IMR-90 (cell line): ENCODE measurements at regions of chr3 and their contacts with region 1.

Region 1: GRCh38 chr3:151852074-151852811 is 21.2 kb upstream of the SUCNR1 start:
- DNase-seq: no peak
- ATAC-seq: no peak
- H3K4me3 ChIP-seq: no peak overlapping the region
- H3K27ac ChIP-seq: no peak overlapping the region
- H3K4me1 ChIP-seq: no peaks in the 10 kb centered on the region
- H3K27me3 ChIP-seq: no peaks in the 10 kb centered on the region
- CTCF ChIP-seq: no peak
- POLR2A ChIP-seq: no peak
- RAD21 ChIP-seq: no peak

Region 2: GRCh38 chr3:151268267-151269235 is 583.7 kb before region 1 on chr3:
- CTCF ChIA-PET with region 1: no interaction called
- POLR2A ChIA-PET with region 1: interaction called, 13 read pairs
- dilution Hi-C with region 1: no loop called
- in situ Hi-C with region 1: no loop called
- intact Hi-C with region 1: no loop called
- DNase-seq: peak; percentile 28
- ATAC-seq: no peak
- H3K4me3 ChIP-seq: no peak overlapping the region
- H3K27ac ChIP-seq: no peak overlapping the region
- H3K4me1 ChIP-seq: peaks cover 2% of the 10 kb centered on the region; the same call in 1 of the 2 replicates
- H3K27me3 ChIP-seq: no peaks in the 10 kb centered on the region
- CTCF ChIP-seq: no peak
- POLR2A ChIP-seq: no peak
- RAD21 ChIP-seq: no peak

Region 3: DNA sequence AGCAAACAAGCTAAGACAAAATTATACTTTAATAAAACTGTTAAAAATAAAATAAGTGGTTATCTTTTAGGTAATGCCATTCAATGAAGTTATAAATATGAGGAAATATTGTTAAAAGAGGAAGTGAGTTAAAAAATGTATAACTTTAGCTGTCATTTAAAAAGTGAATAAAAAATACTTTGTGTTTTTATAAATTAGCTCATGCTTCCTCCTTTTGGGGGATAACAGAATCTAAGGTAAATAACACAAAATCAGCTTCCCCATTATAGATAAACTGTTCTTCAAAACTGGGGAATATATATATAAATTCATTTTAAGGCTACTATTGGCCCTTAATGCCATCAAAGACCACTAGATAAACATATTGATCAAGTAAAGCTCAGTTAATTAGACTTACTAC is 232.2 kb before region 1 on chr3:
- CTCF ChIA-PET with region 1: no interaction called
- POLR2A ChIA-PET with region 1: no interaction called
- dilution Hi-C with region 1: no loop called
- in situ Hi-C with region 1: no loop called
- intact Hi-C with region 1: no loop called
- DNase-seq: no peak
- ATAC-seq: no peak
- H3K4me3 ChIP-seq: no peak overlapping the region
- H3K27ac ChIP-seq: no peak overlapping the region
- H3K4me1 ChIP-seq: no peaks in the 10 kb centered on the region
- H3K27me3 ChIP-seq: no peaks in the 10 kb centered on the region
- CTCF ChIP-seq: no peak
- POLR2A ChIP-seq: no peak
- RAD21 ChIP-seq: no peak